ENCODE measurements at regions of chr12 and their contacts with region 1.

Region 1: GRCh38 chr12:132687208-132688164 is at the starts of genes POLE and PXMP2:
- DNase-seq: peak; percentile 91 to 95
- ATAC-seq: peak; percentile 97 to 98
- H3K4me3 ChIP-seq: peak within 1 kb of the TSS; percentile 65 to 98 (median 80)
- H3K27ac ChIP-seq: peak within 1 kb of the TSS; percentile 62 to 77 (median 72)
- H3K4me1 ChIP-seq: peaks cover 6 to 10% of the 10 kb centered on the region in 2 donors
- H3K27me3 ChIP-seq: no peaks in the 10 kb centered on the region
- CTCF ChIP-seq: peak in 3 of 5 experiments; percentile 12 to 20 (median 18)
- POLR2A ChIP-seq: peak; percentile 74 to 76
- total RNA-seq, gene POLE: 7.1 to 18.7 (median 11.1) TPM
- total RNA-seq, gene PXMP2: 16.0 to 44.8 (median 38.6) TPM

Region 2: GRCh38 chr12:132710422-132711168 is 23.1 kb after region 1 on chr12 and contains the start of gene PGAM5:
- in situ Hi-C with region 1: no loop called
- intact Hi-C with region 1: loop called (anchors 1 kb)
- DNase-seq: peak; percentile 68 to 85
- ATAC-seq: peak; percentile 91 to 93
- H3K4me3 ChIP-seq: peak within 1 kb of the TSS; percentile 74 to 99 (median 89)
- H3K27ac ChIP-seq: peak within 1 kb of the TSS; percentile 86 to 94 (median 90)
- H3K4me1 ChIP-seq: peaks cover 16 to 18% of the 10 kb centered on the region in 2 donors
- H3K27me3 ChIP-seq: no peaks in the 10 kb centered on the region
- CTCF ChIP-seq: peak in 1 of 5 experiments; percentile 7
- POLR2A ChIP-seq: peak; percentile 79 to 86
- total RNA-seq, gene PGAM5: 36.6 to 75.1 (median 62.8) TPM

Region 3: GRCh38 chr12:132761032-132761920 is 73.8 kb after region 1 on chr12 and contains the start of gene ANKLE2:
- in situ Hi-C with region 1: no loop called
- intact Hi-C with region 1: loop called (anchors 5 kb)
- DNase-seq: peak in 1 of 2 donors; percentile 28
- ATAC-seq: peak; percentile 73 to 80
- H3K4me3 ChIP-seq: peak within 1 kb of the TSS; percentile 86 to 98 (median 90)
- H3K27ac ChIP-seq: peak within 1 kb of the TSS; percentile 94 to 100 (median 99)
- H3K4me1 ChIP-seq: peaks cover 21 to 32% of the 10 kb centered on the region in 2 donors
- H3K27me3 ChIP-seq: no peaks in the 10 kb centered on the region
- CTCF ChIP-seq: no peak
- POLR2A ChIP-seq: peak in 1 of 2 donors; percentile 2
- total RNA-seq, gene ANKLE2: 29.6 to 44.9 (median 34.6) TPM

Region 4: DNA sequence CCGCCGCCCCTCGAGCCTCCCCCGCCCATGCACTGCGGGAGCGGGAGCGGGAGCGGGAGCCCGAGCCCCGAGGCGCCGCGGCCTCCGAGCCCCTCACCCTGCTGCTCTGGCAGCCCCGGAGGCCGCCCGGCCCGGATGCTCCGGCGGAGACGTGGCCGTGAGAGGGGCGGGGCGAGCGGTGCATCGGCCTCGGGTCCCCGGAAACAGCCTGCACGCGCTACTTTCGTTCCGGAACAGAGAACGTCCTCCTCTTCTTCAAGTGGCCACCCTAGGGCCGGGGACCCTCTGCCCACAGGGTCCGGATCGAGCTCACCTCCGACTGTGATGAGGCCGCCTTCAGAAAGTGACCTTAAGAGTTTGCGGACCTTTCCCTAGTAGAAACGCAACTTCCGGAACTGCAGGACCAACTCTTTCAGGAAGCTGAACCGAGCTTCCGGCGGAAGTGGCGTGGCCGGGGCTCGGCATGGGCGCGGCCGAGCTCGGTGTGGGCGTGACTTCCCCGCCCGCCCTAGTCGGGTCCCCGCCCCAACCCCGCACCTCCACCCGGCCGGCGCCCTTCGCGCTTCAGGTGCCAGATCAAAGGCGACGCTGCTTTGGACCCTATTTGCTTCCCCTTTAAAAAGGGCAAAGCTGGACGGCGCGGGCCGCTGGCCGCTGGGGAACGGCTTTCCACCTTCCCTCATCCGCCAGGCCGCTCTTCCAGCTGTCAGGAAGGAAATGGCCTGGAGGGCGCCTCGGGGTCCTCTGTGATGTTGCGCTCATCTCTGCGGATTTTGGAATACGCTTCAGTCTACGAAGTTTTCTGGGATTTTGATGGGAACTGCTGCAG is 141.4 kb after region 1 on chr12 and contains the start of gene GOLGA3:
- in situ Hi-C with region 1: no loop called
- intact Hi-C with region 1: loop called (anchors 1 kb)
- DNase-seq: peak; percentile 85 to 88
- ATAC-seq: peak; percentile 97 to 98
- H3K4me3 ChIP-seq: peak within 1 kb of the TSS; percentile 78 to 87 (median 84)
- H3K27ac ChIP-seq: peak within 1 kb of the TSS; percentile 92 to 100 (median 97)
- H3K4me1 ChIP-seq: peaks cover 15 to 22% of the 10 kb centered on the region in 2 donors
- H3K27me3 ChIP-seq: no peaks in the 10 kb centered on the region
- CTCF ChIP-seq: peak in 1 of 5 experiments; percentile 20
- POLR2A ChIP-seq: peak; percentile 40 to 54
- total RNA-seq, gene GOLGA3: 30.0 to 50.0 (median 39.6) TPM